Psoas muscle (tissue), 8 donors: ENCODE measurements at regions of chr1 and their contacts with region 1.

Region 1: GRCh38 chr1:29793101-29793546 is 556.8 kb downstream of the PTPRU start:
- DNase-seq: peak; percentile 71 to 81
- ATAC-seq: peak; percentile 77 to 84 (median 81)
- H3K4me3 ChIP-seq: no peak overlapping the region
- H3K27ac ChIP-seq: no peak overlapping the region
- H3K4me1 ChIP-seq: no peaks in the 10 kb centered on the region
- H3K27me3 ChIP-seq: peaks cover 0 to 4% (median 0%) of the 10 kb centered on the region in 3 donors
- CTCF ChIP-seq: peak; percentile 81

Region 2: DNA sequence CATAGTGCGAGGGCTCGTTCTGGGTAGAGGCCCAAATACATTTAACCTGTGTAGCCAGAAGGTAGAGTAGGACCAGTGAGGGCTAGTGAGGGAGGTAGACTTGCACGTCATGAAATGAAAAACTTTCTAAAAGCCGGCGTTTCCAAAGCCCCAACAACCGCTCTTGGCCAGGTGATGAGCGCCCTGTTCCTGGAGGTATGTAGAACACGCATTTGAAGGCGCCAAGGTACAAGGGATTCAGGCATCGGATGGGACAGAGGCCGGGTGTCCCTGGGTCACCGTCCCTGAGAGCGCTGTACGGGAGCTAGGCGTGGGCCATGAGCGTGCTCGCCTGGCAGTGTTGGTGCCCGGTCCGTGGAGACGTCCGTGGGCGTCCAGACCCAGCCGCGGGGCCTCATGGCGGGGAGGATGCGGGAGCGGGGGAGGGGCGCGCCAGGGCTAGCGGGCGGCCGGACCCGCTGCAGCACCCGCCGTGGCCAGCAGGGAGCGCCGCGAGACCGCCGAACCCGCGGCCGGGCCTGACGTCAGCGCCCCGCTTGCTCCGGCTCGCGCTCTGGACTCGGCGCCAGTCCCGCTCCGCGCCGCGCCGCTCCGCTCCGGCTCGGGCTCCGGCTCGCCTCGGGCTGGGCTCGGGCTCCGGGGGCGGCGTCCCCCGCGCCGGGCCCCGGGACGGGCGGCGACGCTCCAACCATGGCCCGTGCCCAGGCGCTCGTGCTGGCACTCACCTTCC is 557.0 kb before region 1 on chr1 and contains the start of gene PTPRU:
- intact Hi-C with region 1: loop called in 1 of 2 experiments (anchors 5 kb)
- DNase-seq: peak; percentile 81 to 90
- ATAC-seq: peak; percentile 80 to 86 (median 80)
- H3K4me3 ChIP-seq: peak within 1 kb of the TSS; percentile 83
- H3K27ac ChIP-seq: peak within 1 kb of the TSS; percentile 84
- H3K4me1 ChIP-seq: peaks cover 6% of the 10 kb centered on the region
- H3K27me3 ChIP-seq: no peaks in the 10 kb centered on the region
- CTCF ChIP-seq: peak; percentile 97
- total RNA-seq, gene PTPRU: 22.5 to 51.4 (median 28.6) TPM

Region 3: GRCh38 chr1:29550119-29550898 is 242.8 kb before region 1 on chr1:
- intact Hi-C with region 1: no loop called
- DNase-seq: no peak
- ATAC-seq: no peak
- H3K4me3 ChIP-seq: no peak overlapping the region
- H3K27ac ChIP-seq: no peak overlapping the region
- H3K4me1 ChIP-seq: no peaks in the 10 kb centered on the region
- H3K27me3 ChIP-seq: peaks cover 0 to 5% (median 0%) of the 10 kb centered on the region in 3 donors
- CTCF ChIP-seq: no peak

Region 4: DNA sequence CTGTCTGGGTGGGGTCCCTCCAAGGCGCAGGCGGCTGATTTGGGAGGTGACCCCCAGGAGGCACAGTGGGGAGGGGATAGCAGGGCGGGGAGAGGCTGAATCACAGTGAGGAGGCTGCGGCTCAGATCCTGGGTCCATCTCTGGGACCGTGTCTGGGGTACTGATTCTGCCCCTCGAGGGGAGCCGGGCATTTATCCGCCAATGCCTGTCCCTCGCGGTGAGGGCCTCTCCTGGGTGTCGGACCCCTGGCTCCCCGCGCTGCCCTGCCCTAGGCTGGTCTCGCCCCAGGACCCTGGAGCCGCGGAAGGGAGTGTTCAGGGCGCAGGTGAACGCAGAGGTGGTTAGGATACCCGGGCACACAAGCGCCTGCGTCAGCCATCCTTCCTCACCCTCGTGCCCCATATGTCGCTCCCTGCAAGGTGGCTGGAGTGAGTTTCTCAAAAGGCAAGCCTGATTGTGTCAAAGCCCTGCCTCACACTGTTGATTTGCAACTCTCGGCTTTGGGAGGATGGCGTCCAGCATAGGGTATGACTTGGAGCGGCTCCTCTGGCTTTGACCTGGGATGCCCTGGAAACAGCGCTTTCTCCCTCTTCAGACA is 25.9 kb before region 1 on chr1:
- intact Hi-C with region 1: no loop called
- DNase-seq: no peak
- ATAC-seq: no peak
- H3K4me3 ChIP-seq: no peak overlapping the region
- H3K27ac ChIP-seq: no peak overlapping the region
- H3K4me1 ChIP-seq: no peaks in the 10 kb centered on the region
- H3K27me3 ChIP-seq: peaks cover 4 to 20% (median 4%) of the 10 kb centered on the region in 3 donors
- CTCF ChIP-seq: no peak

Region 5: DNA sequence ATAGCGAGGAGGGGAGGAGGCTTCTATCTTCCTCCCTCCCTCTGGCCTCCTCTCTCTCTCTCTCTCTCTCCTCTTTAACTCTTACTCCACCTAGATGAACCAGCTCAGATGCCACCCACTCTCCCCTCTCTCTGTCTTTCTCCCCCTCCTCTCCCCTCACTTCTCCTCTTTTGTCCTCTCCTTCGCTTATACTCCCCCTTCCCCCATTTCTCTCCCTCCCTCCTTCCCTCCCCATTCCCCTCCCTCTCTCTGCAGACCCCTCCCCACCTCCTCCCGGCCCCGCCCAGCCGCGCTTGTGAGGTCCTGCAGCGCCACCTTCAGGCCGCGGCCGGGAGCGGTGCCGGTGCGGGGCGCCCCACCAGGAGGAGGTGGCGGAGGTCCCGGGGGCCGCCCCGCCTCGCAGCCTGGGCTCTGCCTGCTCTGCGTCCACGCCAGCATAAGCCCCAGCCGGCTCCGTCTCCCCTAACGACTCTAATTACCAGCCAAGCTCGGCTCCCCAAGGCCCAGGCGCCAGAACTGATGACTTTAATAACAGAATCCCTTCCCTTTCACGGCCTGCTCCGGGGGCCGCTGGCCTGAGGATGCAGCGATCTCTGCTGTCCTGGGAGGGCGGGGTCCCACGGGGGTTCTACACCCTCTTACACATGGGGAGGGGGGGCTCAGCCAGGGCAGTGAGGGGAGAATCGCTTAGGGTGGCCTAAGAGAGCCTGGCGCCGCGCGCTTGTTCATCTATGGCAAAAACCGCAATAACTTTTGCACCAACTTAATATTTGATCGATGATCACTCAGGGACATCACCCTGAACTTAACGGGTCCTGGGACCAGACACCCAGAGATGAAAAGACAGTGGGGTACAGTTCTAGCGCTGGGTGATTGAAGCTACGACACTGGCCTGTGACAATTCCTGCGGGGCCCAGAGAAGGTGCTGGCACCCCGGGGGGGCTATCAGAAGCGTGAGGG is 293.0 kb after region 1 on chr1:
- intact Hi-C with region 1: loop called in 1 of 2 experiments (anchors 5 kb)
- DNase-seq: peak; percentile 55 to 64
- ATAC-seq: peak in 3 of 4 donors; percentile 55 to 64 (median 63)
- H3K4me3 ChIP-seq: no peak overlapping the region
- H3K27ac ChIP-seq: no peak overlapping the region
- H3K4me1 ChIP-seq: peaks cover 8% of the 10 kb centered on the region
- H3K27me3 ChIP-seq: peaks cover 0 to 11% (median 0%) of the 10 kb centered on the region in 3 donors
- CTCF ChIP-seq: peak; percentile 47

Region 6: GRCh38 chr1:30106125-30106524 is 313.0 kb after region 1 on chr1:
- intact Hi-C with region 1: loop called (anchors 5 to 10 kb)
- DNase-seq: no peak
- ATAC-seq: no peak
- H3K4me3 ChIP-seq: no peak overlapping the region
- H3K27ac ChIP-seq: no peak overlapping the region
- H3K4me1 ChIP-seq: no peaks in the 10 kb centered on the region
- H3K27me3 ChIP-seq: peaks cover 0 to 48% (median 23%) of the 10 kb centered on the region in 3 donors
- CTCF ChIP-seq: peak; percentile 37

Region 7: DNA sequence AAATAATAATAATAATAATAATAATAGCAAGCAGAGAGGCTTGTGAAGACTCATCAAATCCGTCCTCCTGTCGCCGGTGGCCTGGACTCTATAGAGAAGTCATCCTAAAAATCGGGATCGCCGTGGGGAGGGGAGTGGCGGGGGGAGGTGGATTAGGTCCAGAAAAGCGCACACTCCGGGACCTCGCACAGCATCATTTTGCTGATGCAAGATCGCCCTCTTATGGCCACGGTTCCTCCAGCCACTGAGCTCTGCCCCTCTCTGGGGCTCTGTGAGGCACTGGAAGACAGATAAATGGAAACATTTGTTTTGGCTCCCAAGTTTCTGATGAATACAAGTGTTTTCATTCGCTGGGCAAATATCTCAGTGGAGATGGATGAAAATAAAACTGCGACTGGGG is 318.3 kb after region 1 on chr1:
- intact Hi-C with region 1: loop called (anchors 5 to 10 kb)
- DNase-seq: peak in 1 of 2 donors; percentile 39
- ATAC-seq: peak; percentile 55 to 59 (median 57)
- H3K4me3 ChIP-seq: no peak overlapping the region
- H3K27ac ChIP-seq: no peak overlapping the region
- H3K4me1 ChIP-seq: no peaks in the 10 kb centered on the region
- H3K27me3 ChIP-seq: peaks cover 0 to 61% (median 10%) of the 10 kb centered on the region in 3 donors
- CTCF ChIP-seq: peak; percentile 42

Region 8: GRCh38 chr1:30379684-30380624 is 586.8 kb after region 1 on chr1:
- intact Hi-C with region 1: loop called in 1 of 2 experiments (anchors 2 kb)
- DNase-seq: no peak
- ATAC-seq: peak; percentile 69 to 89 (median 85)
- H3K4me3 ChIP-seq: no peak overlapping the region
- H3K27ac ChIP-seq: no peak overlapping the region
- H3K4me1 ChIP-seq: no peaks in the 10 kb centered on the region
- H3K27me3 ChIP-seq: peaks cover 0 to 3% (median 0%) of the 10 kb centered on the region in 3 donors
- CTCF ChIP-seq: peak; percentile 84

Region 9: DNA sequence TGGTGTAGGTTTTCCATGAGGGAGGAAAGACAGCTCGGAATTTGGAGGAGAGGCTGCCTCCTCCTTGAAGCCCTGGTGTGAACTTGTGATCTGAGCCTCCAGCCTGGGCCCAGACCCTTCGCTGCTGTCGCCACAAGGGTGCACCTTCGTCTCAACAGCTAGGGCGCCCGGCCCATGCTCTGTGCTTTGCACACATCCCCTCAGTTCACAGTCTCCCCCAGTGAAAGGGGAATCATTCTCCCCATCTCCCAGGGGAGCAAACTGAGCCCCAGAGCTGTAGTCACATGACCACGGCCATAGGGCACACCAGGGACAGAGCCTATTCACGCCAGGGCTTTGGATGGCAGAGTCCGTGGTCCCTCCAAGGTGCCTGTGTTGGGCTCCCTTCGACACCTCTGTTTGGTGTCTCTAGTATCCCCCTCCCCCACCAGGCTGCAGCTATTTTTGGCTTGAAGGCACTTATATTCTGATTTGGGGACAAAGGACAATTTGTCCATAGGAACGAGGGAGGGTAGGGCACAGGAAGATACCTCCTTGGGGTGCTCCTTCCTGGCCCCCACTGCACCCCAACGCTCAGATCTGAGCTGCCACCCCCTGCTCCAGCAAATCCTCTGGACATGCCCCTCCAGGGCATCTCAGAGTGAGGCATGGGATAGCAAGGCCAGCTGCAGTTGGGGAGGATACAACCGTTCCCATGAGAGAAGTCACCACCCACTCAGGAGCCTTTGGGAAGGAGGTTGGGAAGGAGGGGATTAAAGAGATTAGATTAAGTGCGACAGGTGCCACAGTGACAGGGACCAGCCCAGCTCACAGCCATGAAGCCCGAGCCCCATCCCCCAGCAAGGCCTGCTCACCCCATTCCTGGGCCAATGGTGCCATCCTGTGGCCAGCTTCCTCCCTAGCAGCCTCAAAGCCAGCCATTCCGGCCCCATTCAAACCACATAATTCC is 914.6 kb after region 1 on chr1:
- intact Hi-C with region 1: loop called (anchors 5 to 10 kb)
- DNase-seq: peak; percentile 74 to 90
- ATAC-seq: peak; percentile 94 to 97 (median 94)
- H3K4me3 ChIP-seq: no peak overlapping the region
- H3K27ac ChIP-seq: no peak overlapping the region
- H3K4me1 ChIP-seq: peaks cover 4% of the 10 kb centered on the region
- H3K27me3 ChIP-seq: peaks cover 0 to under 1% (median 0%) of the 10 kb centered on the region in 3 donors
- CTCF ChIP-seq: peak; percentile 91